Right cardiac atrium (tissue), 5 donors: ENCODE measurements at regions of chr17 and their contacts with region 1.

Region 1: DNA sequence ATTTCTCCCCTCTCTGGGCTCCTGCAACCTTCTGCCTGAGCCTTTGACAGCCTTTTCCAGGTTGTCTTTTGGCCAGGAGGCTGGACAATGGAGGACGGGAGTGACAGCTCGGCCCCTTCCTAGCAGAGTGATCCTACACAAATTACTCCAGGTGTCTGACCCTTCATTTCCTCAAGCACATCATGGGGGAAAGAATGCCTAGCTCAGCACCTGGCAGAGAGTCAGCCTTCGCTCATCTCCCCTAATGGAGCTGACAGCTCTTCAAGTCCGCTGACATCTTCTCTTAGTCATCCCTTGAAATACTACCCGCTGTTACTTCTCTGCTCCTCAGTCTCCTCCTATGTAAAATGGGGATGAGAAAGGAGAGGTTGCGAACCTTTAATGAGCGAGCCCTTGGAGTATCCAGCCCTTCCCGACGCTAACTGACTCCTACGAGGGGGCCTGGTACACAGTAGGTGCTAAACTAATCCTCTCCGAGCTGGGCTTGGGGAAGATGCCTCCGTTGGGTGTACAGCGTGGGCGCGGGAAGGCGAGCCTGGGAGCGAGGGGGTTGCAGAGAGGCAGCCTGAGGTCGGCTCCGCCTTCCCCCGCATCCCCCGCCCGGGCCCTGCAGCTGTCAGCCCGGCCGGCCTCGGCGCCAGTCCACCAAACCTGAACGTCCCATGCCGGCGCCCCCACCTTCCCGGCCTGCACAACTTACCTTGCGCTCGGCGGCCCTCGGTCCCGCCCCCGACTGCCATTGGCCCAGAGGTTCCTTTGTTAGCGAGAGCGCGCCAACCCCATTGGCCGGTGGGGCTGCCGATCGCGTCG is 481 bp upstream of the MPRIP start:
- DNase-seq: peak; percentile 99 to 100 (median 100)
- ATAC-seq: peak; percentile 96 to 98
- H3K4me3 ChIP-seq: peak overlapping the region; percentile 81
- H3K27ac ChIP-seq: peak overlapping the region; percentile 76
- H3K4me1 ChIP-seq: peaks cover 13% of the 10 kb centered on the region
- H3K27me3 ChIP-seq: no peaks in the 10 kb centered on the region

Region 2: DNA sequence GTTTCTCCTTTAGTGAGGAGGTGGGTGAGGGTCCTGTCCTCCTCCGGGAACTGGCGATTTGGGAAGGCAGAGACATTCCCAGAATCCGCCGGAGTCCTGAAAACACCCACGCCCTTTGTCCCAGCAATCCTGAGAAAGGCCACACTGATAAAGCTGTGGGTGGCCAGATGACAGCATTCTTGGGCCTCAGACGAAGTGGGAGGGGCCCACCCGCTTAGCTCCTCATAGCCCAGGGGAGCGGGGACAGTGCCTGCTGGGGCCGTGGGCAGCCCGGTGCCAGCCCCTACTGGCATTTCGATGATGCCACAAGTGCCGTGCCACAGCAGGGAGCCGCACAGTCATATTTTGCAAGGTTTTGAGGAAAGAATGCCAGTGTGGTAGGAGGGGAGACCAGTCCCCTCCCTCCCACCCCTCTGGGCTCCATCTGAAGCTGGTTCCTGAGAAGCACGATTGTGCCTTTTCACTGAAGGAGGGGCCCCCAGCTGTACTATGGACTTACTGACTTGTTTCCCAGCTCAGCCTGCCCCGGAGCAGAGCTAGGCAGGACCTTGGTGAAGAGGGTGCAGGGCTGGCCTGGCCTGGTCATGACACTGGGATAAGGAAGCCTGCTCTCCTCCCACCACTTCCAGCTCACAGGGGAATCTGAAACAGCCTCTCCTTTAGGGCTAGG is 20.4 kb before region 1 on chr17:
- intact Hi-C with region 1: no loop called
- DNase-seq: peak; percentile 85 to 89 (median 86)
- ATAC-seq: peak; percentile 90 to 94
- H3K4me3 ChIP-seq: no peak overlapping the region
- H3K27ac ChIP-seq: peak overlapping the region; percentile 43
- H3K4me1 ChIP-seq: peaks cover 9% of the 10 kb centered on the region
- H3K27me3 ChIP-seq: no peaks in the 10 kb centered on the region

Region 3: GRCh38 chr17:17119533-17119932 is 77.8 kb after region 1 on chr17:
- intact Hi-C with region 1: loop called in 1 of 4 experiments (anchors 10 kb)
- DNase-seq: peak in 2 of 3 donors; percentile 50 to 61
- ATAC-seq: peak; percentile 22 to 31
- H3K4me3 ChIP-seq: no peak overlapping the region
- H3K27ac ChIP-seq: peak overlapping the region; percentile 37
- H3K4me1 ChIP-seq: peaks cover 47% of the 10 kb centered on the region
- H3K27me3 ChIP-seq: no peaks in the 10 kb centered on the region